Thyroid gland (tissue), 4 donors: ENCODE measurements at regions of chr2 and their contacts with region 1.

Region 1: GRCh38 chr2:43773876-43774613 is at the start of gene DYNC2LI1:
- DNase-seq: peak; percentile 90 to 93
- H3K4me3 ChIP-seq: peak within 1 kb of the TSS; percentile 37 to 85 (median 79)
- H3K27ac ChIP-seq: peak within 1 kb of the TSS; percentile 83 to 91 (median 90)
- H3K4me1 ChIP-seq: no peaks in the 10 kb centered on the region
- H3K27me3 ChIP-seq: no peaks in the 10 kb centered on the region
- CTCF ChIP-seq: no peak
- POLR2A ChIP-seq: peak in 1 of 2 donors; percentile 80
- total RNA-seq, gene DYNC2LI1: 37.7 to 55.0 (median 45.2) TPM

Region 2: DNA sequence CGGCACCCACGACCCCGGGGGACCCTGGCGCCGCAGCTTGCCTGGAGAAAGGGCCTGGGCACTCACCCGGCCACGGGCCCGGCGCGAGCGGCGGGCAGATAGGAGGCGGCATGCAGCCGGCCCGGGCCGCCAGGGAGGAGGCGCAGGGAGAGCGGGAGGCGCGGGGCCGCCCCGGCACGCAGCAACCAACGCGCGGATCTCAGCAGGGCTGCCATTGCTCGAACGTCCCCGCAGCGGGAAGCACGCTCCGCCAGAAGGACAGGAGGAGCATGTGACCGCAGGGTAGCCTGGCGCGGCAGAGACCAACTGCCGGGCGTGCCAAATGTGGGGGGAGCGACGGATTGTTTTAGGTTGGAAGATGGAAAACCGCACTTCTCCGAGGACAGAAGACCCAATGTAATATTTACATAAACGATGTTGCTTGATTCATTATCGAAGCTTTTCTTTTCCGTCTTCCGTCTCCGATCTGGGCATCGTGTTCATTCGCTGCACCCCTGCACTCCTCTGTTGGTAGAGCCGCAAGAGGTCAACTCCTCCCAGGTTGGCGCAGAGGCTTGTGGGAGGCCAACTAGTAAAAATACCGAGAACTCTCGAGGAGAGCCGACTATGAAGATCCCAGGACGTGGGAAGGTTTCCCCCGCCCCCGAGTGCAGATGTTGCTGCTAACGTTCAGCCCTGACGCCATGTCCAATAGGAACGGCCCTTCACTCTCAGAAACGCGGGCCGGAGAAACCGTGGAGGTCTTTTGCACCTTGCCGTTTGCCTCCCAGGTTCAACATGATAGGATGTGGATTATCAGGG is 221.9 kb after region 1 on chr2 and contains the start of gene LRPPRC:
- intact Hi-C with region 1: loop called (anchors 10 kb)
- DNase-seq: peak; percentile 93 to 94
- H3K4me3 ChIP-seq: peak within 1 kb of the TSS; percentile 87 to 100 (median 100)
- H3K27ac ChIP-seq: peak within 1 kb of the TSS; percentile 54 to 89 (median 72)
- H3K4me1 ChIP-seq: peaks cover 18 to 19% of the 10 kb centered on the region in 2 donors
- H3K27me3 ChIP-seq: no peaks in the 10 kb centered on the region
- CTCF ChIP-seq: peak in 1 of 6 experiments; percentile 28
- POLR2A ChIP-seq: peak in 1 of 2 donors; percentile 46
- total RNA-seq, gene LRPPRC: 47.5 to 79.3 (median 54.9) TPM

Region 3: DNA sequence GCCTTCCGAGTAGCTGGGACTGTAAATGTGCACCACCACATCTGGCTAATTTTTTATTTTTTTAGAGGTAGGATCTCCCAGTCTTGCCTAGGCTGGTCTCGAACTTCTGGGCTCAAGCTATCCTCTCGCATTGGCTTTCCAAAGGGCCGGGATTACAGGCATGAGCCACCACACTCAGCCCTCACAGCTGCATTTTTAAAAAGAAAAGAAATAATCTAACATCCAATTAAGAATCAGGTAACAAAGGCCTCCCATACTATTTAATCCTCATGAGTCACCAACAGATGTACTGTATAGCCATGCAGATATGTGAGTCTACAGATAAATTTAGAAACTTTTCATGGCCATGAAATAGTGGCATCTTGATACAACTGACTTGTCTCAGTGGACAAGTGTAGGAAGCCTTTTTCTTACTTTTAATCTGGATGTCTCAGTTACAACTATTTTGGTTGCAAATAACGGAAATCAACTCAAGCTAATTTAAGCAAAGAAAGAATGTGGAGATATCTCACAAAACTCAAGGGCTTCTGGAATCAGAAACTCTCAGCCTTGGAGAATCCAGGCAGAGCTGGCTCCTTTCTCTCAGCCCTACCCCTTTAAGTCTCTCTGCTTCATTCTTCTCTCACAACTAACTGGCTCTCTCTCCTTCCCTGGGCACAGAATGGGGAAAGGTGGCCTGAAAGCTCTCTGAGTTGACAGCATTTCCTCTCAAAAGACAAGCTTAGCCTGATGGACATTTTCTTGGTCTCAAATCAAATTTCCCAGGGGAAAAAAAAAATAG is 381.8 kb after region 1 on chr2:
- intact Hi-C with region 1: no loop called
- DNase-seq: no peak
- H3K4me3 ChIP-seq: no peak overlapping the region
- H3K27ac ChIP-seq: no peak overlapping the region
- H3K4me1 ChIP-seq: no peaks in the 10 kb centered on the region
- H3K27me3 ChIP-seq: no peaks in the 10 kb centered on the region
- CTCF ChIP-seq: no peak
- POLR2A ChIP-seq: no peak